HepG2 (cell line): ENCODE measurements at regions of chr10 and their contacts with region 1.

Region 1: GRCh38 chr10:32049113-32049512 is 7.1 kb downstream of the KIF5B start:
- DNase-seq: no peak
- ATAC-seq: no peak
- H3K4me3 ChIP-seq: no peak overlapping the region
- H3K27ac ChIP-seq: no peak overlapping the region
- H3K4me1 ChIP-seq: peaks cover 76% of the 10 kb centered on the region
- H3K27me3 ChIP-seq: no peaks in the 10 kb centered on the region
- CTCF ChIP-seq: no peak
- EP300 ChIP-seq: no peak
- POLR2A ChIP-seq: no peak
- RAD21 ChIP-seq: no peak

Region 2: GRCh38 chr10:32017021-32017420 is 32.1 kb before region 1 on chr10:
- CTCF ChIA-PET with region 1: no interaction called
- POLR2A ChIA-PET with region 1: no interaction called
- in situ Hi-C with region 1: no loop called
- intact Hi-C with region 1: loop called (anchors 2 kb)
- DNase-seq: no peak
- ATAC-seq: no peak
- H3K4me3 ChIP-seq: no peak overlapping the region
- H3K27ac ChIP-seq: no peak overlapping the region
- H3K4me1 ChIP-seq: no peaks in the 10 kb centered on the region
- H3K27me3 ChIP-seq: no peaks in the 10 kb centered on the region
- CTCF ChIP-seq: no peak
- EP300 ChIP-seq: no peak
- POLR2A ChIP-seq: no peak
- RAD21 ChIP-seq: no peak

Region 3: DNA sequence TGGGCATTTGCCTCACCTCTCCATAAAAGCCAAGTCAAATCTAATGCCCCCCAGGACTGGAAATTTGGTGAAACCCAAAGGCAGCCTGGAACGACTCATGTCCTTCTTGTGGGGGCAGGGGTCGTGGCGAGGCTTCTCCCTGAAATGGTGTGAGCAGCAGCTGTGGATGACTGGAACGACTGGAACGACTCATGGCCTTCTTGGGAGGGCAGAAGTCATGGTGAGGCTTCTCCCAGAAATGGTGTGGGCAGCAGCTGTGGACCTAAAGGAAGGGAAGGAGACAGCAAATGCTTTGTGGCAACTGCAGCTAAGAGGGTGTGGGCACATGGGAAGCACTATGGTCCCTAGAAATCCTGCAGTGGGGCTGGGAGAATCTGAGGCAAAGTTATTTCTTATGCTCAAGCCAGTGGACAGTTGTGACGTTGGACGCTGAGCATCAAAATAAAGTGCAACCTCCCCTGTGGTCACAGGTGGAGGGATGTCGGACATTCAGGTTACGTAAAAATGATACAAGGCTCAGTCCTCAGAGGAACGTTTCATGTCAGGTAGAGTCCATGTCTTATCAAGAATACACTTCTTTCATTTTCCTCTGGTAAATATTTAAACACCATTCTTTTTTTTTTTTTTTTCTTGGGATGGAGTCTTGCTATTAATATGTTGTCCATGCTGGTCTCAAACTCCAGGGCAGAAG is 114.1 kb after region 1 on chr10:
- CTCF ChIA-PET with region 1: no interaction called
- POLR2A ChIA-PET with region 1: no interaction called
- in situ Hi-C with region 1: no loop called
- intact Hi-C with region 1: no loop called
- DNase-seq: no peak
- ATAC-seq: peak; percentile 21; the same call in 2 of the 3 replicates
- H3K4me3 ChIP-seq: peak overlapping the region in 1 of 3 experiments; percentile 42; a peak in 1 of 6 replicates
- H3K27ac ChIP-seq: no peak overlapping the region
- H3K4me1 ChIP-seq: peaks cover 55% of the 10 kb centered on the region
- H3K27me3 ChIP-seq: no peaks in the 10 kb centered on the region; a peak in 1 of 5 replicates
- CTCF ChIP-seq: no peak
- EP300 ChIP-seq: no peak
- POLR2A ChIP-seq: no peak
- RAD21 ChIP-seq: no peak